MCF 10A (cell line): ENCODE measurements at regions of chr15 and their contacts with region 1.

Region 1: DNA sequence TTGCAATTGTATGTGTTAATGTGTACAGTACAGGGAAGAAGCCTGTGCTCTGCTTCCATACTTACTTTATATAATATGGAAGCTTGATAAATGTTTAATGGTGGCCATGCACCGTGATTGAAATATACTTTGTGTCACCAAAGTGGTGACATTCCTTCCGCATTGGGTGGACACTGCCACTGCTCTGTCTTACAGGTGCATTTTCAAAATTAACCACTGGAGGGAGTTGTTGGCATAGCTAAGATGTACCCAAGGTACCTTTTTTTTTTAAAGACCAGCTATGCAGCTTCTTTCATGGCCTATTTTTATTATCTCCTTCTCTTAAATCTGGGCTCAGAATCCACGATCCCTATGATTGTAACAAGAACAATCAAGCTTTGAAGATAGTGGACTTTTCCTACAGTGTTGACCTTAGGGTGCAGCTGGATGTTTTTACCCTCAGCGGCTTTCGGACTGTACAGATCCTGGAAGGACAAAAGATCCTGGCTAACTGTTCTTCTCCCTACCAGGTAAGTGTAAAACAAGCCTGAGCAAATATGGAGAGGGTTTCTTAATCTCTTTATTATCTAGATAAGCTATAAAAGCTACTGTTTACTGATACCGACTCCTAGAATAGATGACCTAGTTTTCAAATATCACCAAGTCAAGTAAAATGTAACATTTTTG is 21.6 kb upstream of the PAK6 start:
- DNase-seq: peak; percentile 70
- H3K4me3 Mint-ChIP-seq: no peak overlapping the region
- H3K27ac Mint-ChIP-seq: no peak overlapping the region
- H3K4me1 Mint-ChIP-seq: peaks cover 6% of the 10 kb centered on the region
- H3K27me3 Mint-ChIP-seq: no peaks in the 10 kb centered on the region
- CTCF ChIP-seq: peak; percentile 91

Region 2: GRCh38 chr15:40044717-40045571 is 172.3 kb before region 1 on chr15:
- CTCF ChIA-PET with region 1: interaction called, 28 read pairs
- POLR2A ChIA-PET with region 1: interaction called, 3 read pairs
- intact Hi-C with region 1: loop called (anchors 1 kb)
- DNase-seq: peak; percentile 83
- H3K4me3 Mint-ChIP-seq: peak overlapping the region; percentile 41
- H3K27ac Mint-ChIP-seq: no peak overlapping the region
- H3K4me1 Mint-ChIP-seq: peaks cover 26% of the 10 kb centered on the region
- H3K27me3 Mint-ChIP-seq: no peaks in the 10 kb centered on the region
- CTCF ChIP-seq: peak; percentile 95

Region 3: GRCh38 chr15:40238532-40239403 is 21.5 kb after region 1 on chr15 and contains the start of gene PAK6:
- CTCF ChIA-PET with region 1: interaction called, 68 read pairs
- POLR2A ChIA-PET with region 1: interaction called, 21 read pairs
- intact Hi-C with region 1: no loop called
- DNase-seq: peak; percentile 95
- H3K4me3 Mint-ChIP-seq: peak within 1 kb of the TSS; percentile 73
- H3K27ac Mint-ChIP-seq: peak within 1 kb of the TSS; percentile 67
- H3K4me1 Mint-ChIP-seq: peaks cover 50% of the 10 kb centered on the region
- H3K27me3 Mint-ChIP-seq: no peaks in the 10 kb centered on the region
- CTCF ChIP-seq: no peak
- total RNA-seq, gene PAK6: 9.3 and 9.5 TPM in 2 replicates

Region 4: DNA sequence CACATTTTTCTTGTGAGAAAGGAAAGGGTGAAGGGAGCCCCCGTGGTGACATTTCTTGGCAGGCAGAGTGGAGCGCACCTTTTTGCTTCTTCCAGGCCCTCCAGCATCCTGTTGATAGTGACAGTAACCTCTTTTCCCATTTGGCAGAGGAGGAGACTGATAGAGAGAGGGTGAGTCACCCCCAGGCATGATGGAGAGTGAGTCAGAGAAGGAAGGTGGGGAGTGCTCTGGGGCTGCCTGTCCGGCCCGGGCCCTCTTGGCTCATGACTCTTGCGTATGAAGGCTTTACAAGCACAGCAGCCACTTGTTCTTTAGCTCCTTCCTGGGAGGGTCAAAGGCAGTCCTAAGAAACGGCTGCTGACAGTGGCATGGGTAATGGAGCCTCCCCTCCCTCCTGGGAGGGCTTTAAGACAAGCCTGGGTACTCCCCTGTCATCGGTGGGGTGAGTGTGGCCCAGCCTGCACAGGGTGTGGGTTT is 49.6 kb after region 1 on chr15:
- CTCF ChIA-PET with region 1: interaction called, 657 read pairs
- POLR2A ChIA-PET with region 1: interaction called, 9 read pairs
- intact Hi-C with region 1: no loop called
- DNase-seq: peak; percentile 96
- H3K4me3 Mint-ChIP-seq: no peak overlapping the region
- H3K27ac Mint-ChIP-seq: peak overlapping the region; percentile 20
- H3K4me1 Mint-ChIP-seq: peaks cover 7% of the 10 kb centered on the region
- H3K27me3 Mint-ChIP-seq: no peaks in the 10 kb centered on the region
- CTCF ChIP-seq: no peak

Region 5: DNA sequence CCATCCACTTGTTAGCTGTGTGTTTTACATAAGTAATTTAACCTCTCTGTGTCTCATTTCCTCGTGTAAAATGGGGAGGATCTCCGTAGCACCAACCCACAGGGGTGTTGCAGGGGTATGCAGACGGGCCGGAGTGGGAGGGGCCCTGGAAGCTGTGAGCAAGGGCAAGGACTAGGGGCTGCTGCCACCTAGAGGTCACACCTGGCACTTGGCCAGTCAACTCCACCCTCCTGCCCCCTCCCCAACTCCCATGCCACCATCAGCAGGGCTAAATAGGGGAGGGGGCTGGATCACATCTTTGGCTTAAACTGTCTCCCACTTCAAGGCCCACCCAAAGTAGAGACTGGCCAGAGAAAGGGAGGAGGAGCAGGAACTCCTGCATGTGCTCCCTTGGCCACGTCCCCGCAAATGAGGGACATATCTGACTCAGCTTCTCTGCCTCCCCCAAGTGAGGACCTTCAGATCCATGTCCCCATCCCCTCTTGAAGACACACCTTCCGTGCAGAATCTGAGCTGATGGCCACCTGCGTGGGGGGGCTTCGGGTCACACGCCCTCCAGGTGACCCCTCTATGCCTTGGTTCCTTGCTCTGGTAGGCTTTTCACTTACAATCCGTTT is 120.9 kb after region 1 on chr15:
- CTCF ChIA-PET with region 1: interaction called, 23 read pairs
- POLR2A ChIA-PET with region 1: no interaction called
- intact Hi-C with region 1: no loop called
- DNase-seq: peak; percentile 68
- H3K4me3 Mint-ChIP-seq: peak overlapping the region; percentile 79
- H3K27ac Mint-ChIP-seq: peak overlapping the region; percentile 79
- H3K4me1 Mint-ChIP-seq: peaks cover 38% of the 10 kb centered on the region
- H3K27me3 Mint-ChIP-seq: no peaks in the 10 kb centered on the region
- CTCF ChIP-seq: peak; percentile 76